ENCODE measurements at regions of chr6 and their contacts with region 1.

Region 1: DNA sequence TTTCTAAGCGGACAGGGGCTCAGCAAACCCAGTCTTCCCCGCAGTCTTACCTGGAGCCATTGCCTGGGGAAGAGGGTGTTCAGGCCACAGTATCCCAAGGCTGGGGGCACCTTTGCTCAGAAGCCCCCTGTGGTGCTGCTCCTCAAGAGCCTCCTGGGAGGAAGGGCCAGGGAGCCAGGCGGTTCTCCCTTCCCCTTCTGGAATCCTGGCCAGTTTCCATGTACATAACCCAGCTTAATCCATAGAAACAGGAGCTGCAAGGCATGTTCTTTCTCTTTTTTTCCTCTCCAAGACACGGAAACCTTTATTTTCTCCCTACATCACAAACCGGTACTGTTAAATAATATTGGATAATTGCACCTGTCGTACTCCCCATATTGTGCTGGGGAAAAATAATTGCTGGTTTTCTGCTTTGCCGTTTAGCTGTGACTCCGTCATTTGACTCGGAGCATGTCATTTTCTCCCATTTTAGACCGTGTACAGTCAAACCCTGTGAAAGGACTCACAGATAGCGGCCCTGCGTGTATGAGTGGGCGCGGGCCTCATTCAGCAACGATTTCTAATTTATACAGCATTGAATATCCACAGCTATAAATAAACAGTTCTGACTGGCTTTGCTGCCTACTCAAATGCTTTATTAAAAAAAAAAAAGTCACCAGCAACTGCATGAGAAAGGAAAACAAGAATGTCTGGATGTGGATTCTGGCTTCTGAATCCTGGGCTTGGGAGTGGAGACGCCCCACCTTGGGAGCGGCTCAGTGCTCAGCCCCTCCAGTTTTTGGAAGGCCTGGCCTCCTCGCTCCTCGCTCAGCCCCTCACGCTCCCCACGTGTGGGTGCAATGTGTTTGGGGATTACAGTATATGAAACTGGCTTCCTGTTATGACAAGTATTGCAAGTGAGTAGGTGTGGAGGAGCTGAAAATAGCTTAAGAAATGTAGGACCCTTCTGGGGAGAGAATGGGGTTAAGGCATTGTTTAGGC is 67.3 kb downstream of the ADTRP start:
- DNase-seq: peak in 4 of 10 donors; percentile 21 to 48 (median 34)
- ATAC-seq: peak; percentile 43 to 53
- H3K4me3 Mint-ChIP-seq: peak overlapping the region; percentile 31 to 79 (median 72)
- H3K27ac Mint-ChIP-seq: peak overlapping the region; percentile 95 to 100 (median 98)
- H3K4me1 Mint-ChIP-seq: peaks cover 54 to 82% (median 79%) of the 10 kb centered on the region in 4 donors
- H3K27me3 Mint-ChIP-seq: no peaks in the 10 kb centered on the region

Region 2: DNA sequence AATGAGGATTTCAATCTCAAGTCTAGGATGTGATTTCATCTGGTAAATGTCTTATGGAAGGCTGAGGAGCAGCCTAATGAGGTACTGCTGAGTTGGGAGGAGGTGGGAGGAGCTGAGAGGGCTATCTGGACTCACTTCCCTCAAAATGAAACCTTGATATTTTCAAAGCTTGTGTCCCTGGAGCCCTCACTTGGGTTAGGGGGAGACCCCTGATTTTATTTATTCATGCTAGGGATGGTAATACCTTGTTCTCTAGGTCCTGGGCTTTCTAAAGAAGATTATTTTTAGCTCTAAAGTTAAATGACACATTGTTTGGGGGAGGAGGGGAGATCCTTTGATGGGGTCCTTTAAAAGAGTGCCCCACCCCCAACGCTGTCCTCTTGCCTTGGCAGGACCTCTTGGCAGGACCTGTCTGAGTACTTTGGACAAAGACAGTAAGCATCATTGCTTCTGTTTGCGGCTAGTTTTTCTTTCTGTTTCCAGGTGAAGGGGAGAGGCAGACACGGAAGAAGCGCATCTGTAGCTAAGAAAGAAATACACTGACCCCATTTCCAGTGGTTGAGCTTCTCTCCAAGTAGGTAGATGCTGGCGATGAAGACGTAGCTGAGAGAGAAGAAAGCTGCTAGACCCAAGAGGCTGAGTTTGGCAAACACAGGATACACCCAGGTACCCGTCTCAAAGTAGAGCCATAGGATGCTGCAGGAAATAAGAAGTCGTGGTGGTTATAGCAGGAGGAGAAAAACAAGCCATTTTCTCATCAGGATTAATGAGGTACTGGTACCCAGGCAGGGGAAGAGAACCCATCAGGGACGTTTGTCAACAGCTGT is 11.7 kb after region 1 on chr6:
- POLR2A ChIA-PET with region 1: interaction called, 16 read pairs
- DNase-seq: no peak
- ATAC-seq: peak in 1 of 2 donors; percentile 53
- H3K4me3 Mint-ChIP-seq: peak overlapping the region in 7 of 10 donors; percentile 15 to 74 (median 42)
- H3K27ac Mint-ChIP-seq: peak overlapping the region in 8 of 10 donors; percentile 28 to 87 (median 60)
- H3K4me1 Mint-ChIP-seq: peaks cover 38 to 56% (median 42%) of the 10 kb centered on the region in 4 donors
- H3K27me3 Mint-ChIP-seq: no peaks in the 10 kb centered on the region

Region 3: GRCh38 chr6:11727998-11728961 is 17.0 kb after region 1 on chr6:
- POLR2A ChIA-PET with region 1: interaction called, 16 read pairs
- DNase-seq: peak in 4 of 10 donors; percentile 12 to 53 (median 22)
- ATAC-seq: peak; percentile 59 to 66
- H3K4me3 Mint-ChIP-seq: peak overlapping the region; percentile 31 to 89 (median 74)
- H3K27ac Mint-ChIP-seq: peak overlapping the region; percentile 63 to 98 (median 90)
- H3K4me1 Mint-ChIP-seq: peaks cover 51 to 92% (median 70%) of the 10 kb centered on the region in 4 donors
- H3K27me3 Mint-ChIP-seq: no peaks in the 10 kb centered on the region

Region 4: GRCh38 chr6:12011276-12012076 is 300.2 kb after region 1 on chr6:
- POLR2A ChIA-PET with region 1: interaction called, 25 read pairs
- DNase-seq: peak; percentile 81 to 98 (median 96)
- ATAC-seq: peak; percentile 66 to 76
- H3K4me3 Mint-ChIP-seq: peak overlapping the region; percentile 87 to 100 (median 93)
- H3K27ac Mint-ChIP-seq: peak overlapping the region; percentile 90 to 100 (median 98)
- H3K4me1 Mint-ChIP-seq: peaks cover 31 to 60% (median 56%) of the 10 kb centered on the region in 4 donors
- H3K27me3 Mint-ChIP-seq: no peaks in the 10 kb centered on the region

Measured in naive thymus-derived CD8-positive, alpha-beta T cell (primary cell).